ENCODE measurements at regions of chr6 and their contacts with region 1.

Region 1: DNA sequence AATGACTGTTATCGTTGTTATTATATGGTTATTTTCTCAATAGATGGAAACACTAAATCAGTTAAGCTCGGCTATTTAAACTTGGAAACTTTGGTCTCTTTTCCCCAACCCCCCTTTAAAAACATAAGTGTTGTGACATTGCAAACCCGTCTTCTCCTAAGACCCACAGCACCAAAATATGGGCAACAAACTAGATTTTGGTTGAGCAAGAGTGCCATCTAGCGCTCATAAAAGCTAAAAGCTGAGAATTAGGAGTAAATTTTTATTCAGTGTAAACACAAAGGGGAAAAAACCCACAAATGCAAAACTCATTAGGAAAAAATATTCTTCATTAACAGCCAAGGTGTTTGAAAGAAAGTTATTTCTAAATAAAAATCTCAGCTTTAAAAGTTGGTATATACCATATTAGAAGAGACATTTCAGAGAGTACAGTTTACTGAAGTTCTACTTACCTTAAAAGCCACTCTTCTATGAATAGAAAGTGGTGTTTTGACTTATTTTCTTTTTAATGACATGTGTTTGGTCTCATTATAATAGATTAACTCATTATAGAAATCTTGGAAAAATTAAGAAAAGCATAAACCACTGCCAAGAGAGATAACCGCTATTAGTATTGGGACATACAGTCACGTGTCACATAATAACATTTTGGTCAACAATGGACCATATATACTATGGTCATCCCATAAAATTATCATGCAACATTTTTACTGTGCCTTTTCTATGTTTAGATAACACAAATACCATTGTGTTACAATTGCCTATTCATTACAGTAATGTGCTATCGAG is 21.1 kb downstream of the SESN1 start:
- DNase-seq: peak in 11 of 14 experiments; percentile 17 to 87 (median 37)
- ATAC-seq: peak; percentile 74
- H3K4me3 ChIP-seq: no peak overlapping the region
- H3K4me3 Mint-ChIP-seq: peak overlapping the region; percentile 0
- H3K27ac ChIP-seq: no peak overlapping the region
- H3K27ac Mint-ChIP-seq: no peak overlapping the region
- H3K4me1 ChIP-seq: peaks cover 8% of the 10 kb centered on the region
- H3K4me1 Mint-ChIP-seq: peaks cover 25% of the 10 kb centered on the region
- H3K27me3 ChIP-seq: no peaks in the 10 kb centered on the region
- H3K27me3 Mint-ChIP-seq: no peaks in the 10 kb centered on the region
- CTCF ChIP-seq: peak; percentile 85

Region 2: DNA sequence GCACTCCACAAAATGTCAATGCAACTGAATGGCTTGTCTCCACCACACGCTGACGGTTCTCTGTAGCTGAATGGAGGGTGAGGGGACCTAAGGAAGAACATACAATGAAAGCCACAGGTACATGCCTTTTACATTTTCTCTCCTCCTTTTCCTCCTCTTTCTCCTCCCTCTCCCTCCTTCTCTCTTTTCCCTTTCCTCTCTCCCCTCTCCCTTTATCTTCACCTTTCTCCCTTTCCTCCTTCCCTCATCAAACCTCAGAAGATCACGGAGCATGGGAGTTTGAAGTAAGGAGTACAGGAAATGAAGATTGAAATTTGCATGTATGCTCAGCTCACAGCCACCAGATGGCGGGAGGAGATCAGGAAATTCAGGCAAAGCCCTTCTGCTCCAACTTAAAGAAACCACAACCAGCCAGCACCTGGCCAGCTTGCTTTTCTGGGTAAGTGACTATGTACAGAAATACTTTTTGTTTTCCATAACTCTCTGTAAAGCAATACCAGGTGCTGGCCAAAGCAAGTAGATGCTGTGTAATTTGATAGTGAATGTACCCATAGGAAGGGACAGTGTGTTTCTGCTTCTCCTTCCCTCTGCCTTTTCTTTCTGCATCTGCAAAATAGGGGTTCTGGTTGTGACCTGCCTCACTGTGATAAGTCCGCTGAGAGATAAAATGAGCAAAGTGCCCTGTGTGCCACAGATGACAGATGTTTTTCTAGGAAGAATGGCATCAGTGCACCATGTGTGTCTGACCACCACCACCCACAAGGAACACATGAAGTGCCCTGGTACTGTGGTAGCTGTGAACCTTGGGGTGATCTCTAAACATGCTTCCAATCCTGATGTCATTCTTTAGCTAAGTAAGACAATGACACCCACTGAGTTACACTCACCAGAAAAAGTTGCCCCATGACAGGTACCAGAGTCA is 531.4 kb before region 1 on chr6:
- CTCF ChIA-PET with region 1: interaction called, 50 read pairs
- POLR2A ChIA-PET with region 1: interaction called, 32 read pairs
- intact Hi-C with region 1: loop called (anchors 1 kb)
- DNase-seq: peak; percentile 56 to 88 (median 61)
- ATAC-seq: peak; percentile 91
- H3K4me3 ChIP-seq: no peak overlapping the region
- H3K4me3 Mint-ChIP-seq: no peak overlapping the region
- H3K27ac ChIP-seq: no peak overlapping the region
- H3K27ac Mint-ChIP-seq: no peak overlapping the region
- H3K4me1 ChIP-seq: peaks cover 12% of the 10 kb centered on the region
- H3K4me1 Mint-ChIP-seq: peaks cover 7% of the 10 kb centered on the region
- H3K27me3 ChIP-seq: no peaks in the 10 kb centered on the region
- H3K27me3 Mint-ChIP-seq: peaks cover 5% of the 10 kb centered on the region
- CTCF ChIP-seq: peak; percentile 89

Region 3: DNA sequence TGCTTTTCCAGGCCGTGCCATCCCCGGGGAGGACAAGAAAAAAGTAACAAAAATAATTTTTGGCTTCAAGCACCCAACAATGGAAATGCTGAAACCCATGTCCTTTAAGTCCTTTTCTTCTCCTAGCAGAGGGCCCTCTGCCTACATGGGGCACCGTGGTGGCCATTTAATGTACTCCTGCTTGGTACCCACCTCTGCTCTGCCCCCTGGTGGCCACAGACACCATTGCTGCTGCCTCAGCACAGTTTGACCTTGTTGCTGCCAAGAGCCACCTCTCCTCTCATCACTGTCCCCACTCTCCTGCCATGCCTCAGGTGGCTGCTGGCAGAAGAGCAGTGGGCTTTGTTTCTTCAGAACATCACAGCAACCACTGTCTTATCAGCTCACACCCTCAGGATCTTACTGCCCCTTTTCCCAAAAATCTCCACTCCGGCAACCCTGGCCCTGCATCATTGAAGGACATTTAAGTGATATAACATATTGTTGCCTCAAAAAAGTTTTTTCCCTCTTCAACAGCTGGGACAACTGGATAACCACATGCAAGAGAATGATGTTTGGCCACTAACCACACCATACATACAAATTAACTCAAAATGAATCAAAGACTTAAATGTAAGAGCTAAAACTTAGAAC is 238.2 kb before region 1 on chr6:
- CTCF ChIA-PET with region 1: interaction called, 5 read pairs
- POLR2A ChIA-PET with region 1: no interaction called
- intact Hi-C with region 1: loop called (anchors 2 kb)
- DNase-seq: peak; percentile 75 to 91 (median 82)
- ATAC-seq: peak; percentile 99
- H3K4me3 ChIP-seq: no peak overlapping the region
- H3K4me3 Mint-ChIP-seq: peak overlapping the region; percentile 42
- H3K27ac ChIP-seq: no peak overlapping the region
- H3K27ac Mint-ChIP-seq: no peak overlapping the region
- H3K4me1 ChIP-seq: peaks cover 13% of the 10 kb centered on the region
- H3K4me1 Mint-ChIP-seq: peaks cover 31% of the 10 kb centered on the region
- H3K27me3 ChIP-seq: no peaks in the 10 kb centered on the region
- H3K27me3 Mint-ChIP-seq: no peaks in the 10 kb centered on the region
- CTCF ChIP-seq: peak; percentile 91

Region 4: GRCh38 chr6:108947114-108947854 is 126.3 kb before region 1 on chr6:
- CTCF ChIA-PET with region 1: no interaction called
- POLR2A ChIA-PET with region 1: interaction called, 10 read pairs
- intact Hi-C with region 1: loop called in 1 of 2 experiments (anchors 5 kb)
- DNase-seq: no peak
- ATAC-seq: no peak
- H3K4me3 ChIP-seq: no peak overlapping the region
- H3K4me3 Mint-ChIP-seq: no peak overlapping the region
- H3K27ac ChIP-seq: no peak overlapping the region
- H3K27ac Mint-ChIP-seq: no peak overlapping the region
- H3K4me1 ChIP-seq: peaks cover 26% of the 10 kb centered on the region
- H3K4me1 Mint-ChIP-seq: peaks cover 65% of the 10 kb centered on the region
- H3K27me3 ChIP-seq: no peaks in the 10 kb centered on the region
- H3K27me3 Mint-ChIP-seq: no peaks in the 10 kb centered on the region
- CTCF ChIP-seq: no peak

Region 5: DNA sequence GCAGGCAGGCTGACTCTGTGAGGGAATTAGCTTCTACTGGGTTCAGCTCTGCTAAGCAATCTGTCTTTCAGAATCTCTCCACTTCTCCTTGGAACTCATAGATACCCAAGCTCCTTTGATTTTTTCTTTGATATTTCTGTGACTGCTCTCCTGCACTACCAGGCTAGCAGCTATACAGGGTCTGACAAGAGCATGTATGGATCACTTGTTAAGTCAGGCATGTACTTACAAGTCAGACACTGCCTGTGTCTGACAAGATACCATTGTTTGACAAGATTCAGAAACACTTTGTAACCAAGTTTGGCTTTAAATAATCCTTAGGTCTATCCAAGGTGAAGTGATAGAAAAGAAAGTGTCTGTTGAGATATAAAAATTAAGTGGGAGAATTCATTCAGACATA is 58.4 kb before region 1 on chr6:
- CTCF ChIA-PET with region 1: interaction called, 4 read pairs
- POLR2A ChIA-PET with region 1: interaction called, 43 read pairs
- intact Hi-C with region 1: no loop called
- DNase-seq: peak in 1 of 14 experiments; percentile 13
- ATAC-seq: no peak
- H3K4me3 ChIP-seq: no peak overlapping the region
- H3K4me3 Mint-ChIP-seq: peak overlapping the region; percentile 26
- H3K27ac ChIP-seq: no peak overlapping the region
- H3K27ac Mint-ChIP-seq: peak overlapping the region; percentile 89
- H3K4me1 ChIP-seq: peaks cover 30% of the 10 kb centered on the region
- H3K4me1 Mint-ChIP-seq: peaks cover 73% of the 10 kb centered on the region
- H3K27me3 ChIP-seq: no peaks in the 10 kb centered on the region
- H3K27me3 Mint-ChIP-seq: no peaks in the 10 kb centered on the region
- CTCF ChIP-seq: no peak